GM10248 (cell line): ENCODE measurements at regions of chr13 and their contacts with region 1.

Region 1: GRCh38 chr13:92175330-92175729 is 776.9 kb downstream of the GPC5 start:
- DNase-seq: peak; percentile 10
- CTCF ChIP-seq: peak; percentile 19

Region 2: DNA sequence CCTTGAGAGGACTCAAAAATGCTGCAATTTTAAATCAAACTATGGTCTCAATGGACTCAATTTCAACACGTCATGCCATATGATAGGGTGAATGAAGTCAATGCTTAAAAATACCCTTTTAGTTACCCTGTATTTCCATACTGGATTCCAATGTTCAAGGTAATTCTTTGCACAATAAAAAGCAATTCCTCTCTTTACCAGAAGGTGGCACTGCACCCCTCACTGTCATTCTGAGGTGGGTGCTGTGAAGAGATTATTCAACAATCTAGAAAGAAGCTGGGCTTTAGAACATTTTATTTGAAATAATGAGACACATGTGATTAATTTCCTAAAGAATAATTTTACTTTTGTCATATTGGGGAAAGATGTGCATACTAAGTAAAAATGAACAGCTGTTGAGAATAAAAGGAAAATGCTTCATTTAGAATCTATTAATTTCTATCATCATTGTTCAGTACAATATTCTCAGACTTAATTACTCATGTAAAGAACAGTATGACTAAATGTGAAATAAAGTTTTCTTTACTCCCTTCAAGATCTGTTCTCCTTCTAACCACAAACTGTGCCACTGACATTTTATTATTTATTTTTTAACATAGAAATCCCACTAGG is 12.2 kb after region 1 on chr13:
- CTCF ChIA-PET with region 1: interaction called, 16 read pairs
- POLR2A ChIA-PET with region 1: no interaction called
- DNase-seq: peak; percentile 33
- CTCF ChIP-seq: peak; percentile 79